CD8-positive, alpha-beta T cell (primary cell): ENCODE measurements at regions of chr9 and their contacts with region 1.

Region 1: DNA sequence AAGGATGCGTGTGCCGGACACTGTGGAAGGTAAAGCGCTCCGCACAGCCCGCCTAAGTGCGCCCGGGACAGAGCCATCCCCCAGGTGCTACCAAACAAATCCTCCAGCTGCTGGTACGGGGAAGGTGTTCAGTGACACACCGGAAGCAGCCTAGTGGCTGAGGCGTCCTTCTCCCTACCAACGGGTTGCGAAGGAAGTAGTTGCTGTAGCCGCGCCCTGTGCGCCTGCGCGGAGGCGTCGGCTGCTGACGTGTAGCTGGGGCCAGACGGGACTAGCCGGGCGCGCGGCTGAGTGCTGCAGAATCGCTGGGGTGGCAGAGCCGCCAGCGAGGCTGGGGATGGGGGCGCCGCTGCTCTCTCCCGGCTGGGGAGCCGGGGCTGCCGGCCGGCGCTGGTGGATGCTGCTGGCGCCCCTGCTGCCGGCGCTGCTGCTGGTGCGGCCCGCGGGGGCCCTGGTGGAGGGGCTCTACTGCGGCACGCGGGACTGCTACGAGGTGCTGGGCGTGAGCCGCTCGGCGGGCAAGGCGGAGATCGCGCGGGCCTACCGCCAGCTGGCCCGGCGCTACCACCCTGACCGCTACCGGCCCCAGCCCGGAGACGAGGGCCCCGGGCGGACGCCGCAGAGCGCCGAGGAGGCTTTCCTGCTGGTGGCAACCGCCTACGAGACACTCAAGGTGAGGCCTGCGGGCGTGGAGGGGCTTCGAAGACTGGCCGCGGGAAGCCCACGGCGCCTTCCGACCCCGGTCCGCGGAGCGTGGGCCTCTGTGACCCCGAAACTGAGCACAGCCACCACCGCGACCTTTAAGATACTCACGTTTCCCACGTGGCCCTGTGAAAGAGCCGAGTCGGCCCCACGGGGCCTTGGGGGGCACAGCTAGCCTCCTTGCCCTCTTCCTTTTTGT is at the start of gene DNAJC25:
- DNase-seq: peak; percentile 92 to 99 (median 96)
- ATAC-seq: peak; percentile 94
- H3K4me3 ChIP-seq: peak within 1 kb of the TSS; percentile 50 to 69
- H3K4me3 Mint-ChIP-seq: peak within 1 kb of the TSS; percentile 98
- H3K27ac ChIP-seq: peak within 1 kb of the TSS; percentile 78 to 80
- H3K27ac Mint-ChIP-seq: peak within 1 kb of the TSS; percentile 92
- H3K4me1 ChIP-seq: peaks cover 18% of the 10 kb centered on the region
- H3K4me1 Mint-ChIP-seq: peaks cover 47% of the 10 kb centered on the region
- H3K27me3 ChIP-seq: no peaks in the 10 kb centered on the region
- H3K27me3 Mint-ChIP-seq: no peaks in the 10 kb centered on the region
- CTCF ChIP-seq: no peak
- total RNA-seq, gene DNAJC25: 5.8 to 7.2 TPM

Region 2: DNA sequence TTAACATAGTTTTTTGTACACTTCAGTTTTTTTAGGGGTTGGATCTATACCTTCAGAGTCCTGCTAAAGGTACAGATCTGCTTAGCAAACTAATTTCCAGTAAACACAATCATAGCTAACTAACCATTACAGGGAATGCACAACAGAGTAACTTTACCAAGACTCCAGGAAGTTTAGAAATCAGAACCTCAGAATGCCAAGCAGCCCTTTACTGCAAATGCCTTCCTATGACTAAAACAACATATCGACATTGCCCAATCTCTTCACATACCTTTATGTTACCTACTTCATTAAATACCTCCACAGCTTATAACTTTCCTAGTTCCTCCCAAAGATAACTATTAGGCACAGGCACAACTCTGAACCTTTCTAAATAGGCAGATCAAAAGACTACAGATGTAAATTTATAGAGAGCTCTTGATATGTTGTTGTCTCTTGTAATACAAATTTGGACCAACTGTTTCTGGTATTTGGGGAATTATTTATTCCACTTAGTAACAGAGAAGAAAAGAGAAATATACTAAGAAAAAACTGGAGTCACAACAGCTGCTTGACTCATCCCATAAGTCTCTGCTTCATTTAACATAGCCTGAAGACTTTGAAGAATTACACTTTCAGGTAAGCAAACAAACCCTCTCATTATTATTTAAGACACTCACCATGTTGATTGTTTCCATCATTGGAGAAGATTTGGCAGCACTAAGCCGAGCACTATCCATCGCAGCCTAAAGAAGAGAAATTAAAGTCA is 255.3 kb before region 1 on chr9:
- CTCF ChIA-PET with region 1: no interaction called
- POLR2A ChIA-PET with region 1: no interaction called
- intact Hi-C with region 1: no loop called
- DNase-seq: no peak
- ATAC-seq: no peak
- H3K4me3 ChIP-seq: no peak overlapping the region
- H3K4me3 Mint-ChIP-seq: no peak overlapping the region
- H3K27ac ChIP-seq: no peak overlapping the region
- H3K27ac Mint-ChIP-seq: peak overlapping the region; percentile 5
- H3K4me1 ChIP-seq: no peaks in the 10 kb centered on the region
- H3K4me1 Mint-ChIP-seq: no peaks in the 10 kb centered on the region
- H3K27me3 ChIP-seq: no peaks in the 10 kb centered on the region
- H3K27me3 Mint-ChIP-seq: no peaks in the 10 kb centered on the region
- CTCF ChIP-seq: no peak

Region 3: DNA sequence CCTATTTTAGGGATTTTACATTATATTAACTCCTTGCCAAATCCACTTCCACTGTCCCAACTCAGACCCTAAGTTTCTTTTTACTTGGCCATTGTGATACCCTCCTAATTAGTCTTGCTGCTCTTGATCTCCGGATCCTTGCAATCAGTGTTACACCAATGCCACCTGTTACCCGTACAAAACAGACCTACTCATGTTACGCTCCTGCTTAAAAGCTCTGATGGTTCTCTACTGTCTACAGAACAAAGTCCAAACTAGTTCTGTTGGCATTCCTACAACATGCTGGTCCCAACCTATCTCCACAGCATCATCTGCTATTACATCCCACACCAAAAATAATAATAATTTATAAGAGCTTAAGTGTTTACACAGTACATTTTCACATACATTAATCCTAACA is 156.9 kb before region 1 on chr9:
- CTCF ChIA-PET with region 1: no interaction called
- POLR2A ChIA-PET with region 1: no interaction called
- intact Hi-C with region 1: no loop called
- DNase-seq: no peak
- ATAC-seq: no peak
- H3K4me3 ChIP-seq: no peak overlapping the region
- H3K4me3 Mint-ChIP-seq: no peak overlapping the region
- H3K27ac ChIP-seq: no peak overlapping the region
- H3K27ac Mint-ChIP-seq: peak overlapping the region; percentile 12
- H3K4me1 ChIP-seq: no peaks in the 10 kb centered on the region
- H3K4me1 Mint-ChIP-seq: peaks cover 52% of the 10 kb centered on the region
- H3K27me3 ChIP-seq: no peaks in the 10 kb centered on the region
- H3K27me3 Mint-ChIP-seq: no peaks in the 10 kb centered on the region
- CTCF ChIP-seq: no peak

Region 4: DNA sequence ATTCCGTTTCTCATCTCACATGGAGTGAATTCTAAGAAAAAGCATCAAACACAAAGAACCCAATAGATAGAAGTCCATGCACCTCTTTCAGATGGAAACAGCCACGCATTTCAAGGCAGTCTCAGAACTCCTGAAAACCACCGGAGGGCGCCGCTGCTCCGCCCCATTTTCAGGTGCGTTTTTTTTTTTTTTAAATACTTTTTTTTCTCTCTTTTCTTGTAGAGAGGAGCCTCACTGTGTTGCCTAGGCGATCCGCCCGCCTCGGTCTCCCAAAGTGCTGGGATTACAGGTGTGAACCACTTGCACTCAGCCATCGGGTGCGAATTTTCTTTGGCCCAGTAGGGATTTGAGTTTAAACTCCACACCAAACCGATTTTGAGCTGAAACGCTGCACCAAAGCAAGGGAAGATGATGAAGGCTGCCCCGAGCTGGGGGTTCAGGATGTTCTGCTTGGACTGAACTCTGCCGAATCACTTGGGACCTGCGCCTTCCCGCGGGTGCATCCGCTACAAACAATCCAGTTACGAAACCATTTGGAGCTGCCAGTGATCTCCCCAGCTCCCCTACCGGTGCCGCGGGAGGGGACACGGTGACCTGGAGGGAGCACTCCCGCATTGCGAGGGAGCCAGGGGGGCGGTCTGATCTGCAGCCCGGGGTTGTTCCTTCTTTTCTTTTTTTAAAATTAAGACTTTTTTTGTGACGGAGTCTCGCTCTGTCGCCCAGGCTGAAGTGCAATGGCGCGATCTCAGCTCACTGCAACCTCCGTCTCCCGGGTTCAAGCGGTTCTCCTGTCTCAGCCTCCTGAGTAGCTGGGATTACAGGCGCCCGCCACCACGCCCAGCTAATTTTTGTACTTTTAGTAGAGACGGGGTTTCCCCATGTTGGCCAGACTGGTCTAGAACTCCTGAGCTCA is 33.2 kb before region 1 on chr9:
- CTCF ChIA-PET with region 1: interaction called, 3 read pairs
- POLR2A ChIA-PET with region 1: no interaction called
- intact Hi-C with region 1: loop called in 1 of 2 experiments (anchors 2 kb)
- DNase-seq: peak; percentile 9 to 80 (median 62)
- ATAC-seq: peak; percentile 75
- H3K4me3 ChIP-seq: peak overlapping the region; percentile 47 to 66
- H3K4me3 Mint-ChIP-seq: peak overlapping the region; percentile 87
- H3K27ac ChIP-seq: no peak overlapping the region
- H3K27ac Mint-ChIP-seq: no peak overlapping the region
- H3K4me1 ChIP-seq: peaks cover 12% of the 10 kb centered on the region
- H3K4me1 Mint-ChIP-seq: peaks cover 19% of the 10 kb centered on the region
- H3K27me3 ChIP-seq: peaks cover 15 to 16% of the 10 kb centered on the region in 2 experiments
- H3K27me3 Mint-ChIP-seq: peaks cover 41% of the 10 kb centered on the region
- CTCF ChIP-seq: peak; percentile 72

Region 5: GRCh38 chr9:111752455-111752854 is 121.1 kb after region 1 on chr9:
- CTCF ChIA-PET with region 1: no interaction called
- POLR2A ChIA-PET with region 1: no interaction called
- intact Hi-C with region 1: no loop called
- DNase-seq: no peak
- ATAC-seq: no peak
- H3K4me3 ChIP-seq: no peak overlapping the region
- H3K4me3 Mint-ChIP-seq: no peak overlapping the region
- H3K27ac ChIP-seq: no peak overlapping the region
- H3K27ac Mint-ChIP-seq: no peak overlapping the region
- H3K4me1 ChIP-seq: no peaks in the 10 kb centered on the region
- H3K4me1 Mint-ChIP-seq: no peaks in the 10 kb centered on the region
- H3K27me3 ChIP-seq: no peaks in the 10 kb centered on the region
- H3K27me3 Mint-ChIP-seq: no peaks in the 10 kb centered on the region
- CTCF ChIP-seq: no peak

Region 6: DNA sequence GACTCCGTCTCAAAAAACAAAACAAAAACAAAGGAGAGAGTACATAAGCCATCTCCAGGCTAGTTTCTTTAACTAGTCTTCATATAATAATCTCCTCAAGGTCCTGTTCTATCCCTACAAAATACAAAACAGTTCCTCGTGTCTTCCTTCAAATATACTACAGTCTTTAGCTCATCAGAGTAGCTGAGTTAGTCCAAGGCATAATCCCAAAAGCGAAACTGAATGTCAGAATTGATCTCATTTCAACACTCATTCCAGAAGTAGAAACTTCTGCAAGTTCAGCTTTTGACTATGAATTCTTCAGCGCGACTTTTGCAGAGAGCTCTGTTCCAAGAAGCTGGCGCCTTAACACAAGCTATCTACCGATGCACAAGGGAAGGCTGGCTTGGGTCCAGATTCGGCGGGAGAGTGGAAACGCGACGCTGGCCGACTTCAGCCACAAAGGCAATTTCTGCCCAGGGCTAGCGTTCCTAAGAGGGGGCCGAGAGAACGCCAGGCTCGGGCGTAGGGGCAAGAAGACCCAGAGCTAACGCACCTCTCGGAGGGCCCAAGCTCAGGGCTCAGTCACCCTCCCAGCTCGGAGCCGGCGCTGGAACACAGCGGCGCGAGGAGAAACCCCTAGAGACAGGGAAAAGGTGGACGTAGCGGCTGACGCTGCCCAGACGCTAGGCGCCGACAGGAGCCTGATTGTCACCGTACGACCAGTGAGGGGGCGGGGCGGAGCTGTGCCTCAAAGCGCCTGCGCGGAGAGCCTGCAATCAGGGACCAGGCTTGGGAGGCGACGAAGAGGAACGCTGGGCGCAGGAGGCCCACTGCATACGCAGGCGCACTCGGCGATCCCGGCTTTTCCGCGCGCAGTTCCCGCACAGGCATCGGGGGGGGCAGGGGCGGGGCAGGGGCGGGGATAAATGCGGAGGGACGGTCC is 748.1 kb after region 1 on chr9:
- CTCF ChIA-PET with region 1: no interaction called
- POLR2A ChIA-PET with region 1: no interaction called
- intact Hi-C with region 1: loop called (anchors 1 to 10 kb)
- DNase-seq: peak; percentile 93 to 99 (median 97)
- ATAC-seq: peak; percentile 95
- H3K4me3 ChIP-seq: peak overlapping the region; percentile 81 to 96
- H3K4me3 Mint-ChIP-seq: peak overlapping the region; percentile 99
- H3K27ac ChIP-seq: peak overlapping the region; percentile 77 to 92
- H3K27ac Mint-ChIP-seq: peak overlapping the region; percentile 96
- H3K4me1 ChIP-seq: peaks cover 27% of the 10 kb centered on the region
- H3K4me1 Mint-ChIP-seq: peaks cover 54% of the 10 kb centered on the region
- H3K27me3 ChIP-seq: no peaks in the 10 kb centered on the region
- H3K27me3 Mint-ChIP-seq: no peaks in the 10 kb centered on the region
- CTCF ChIP-seq: no peak

Region 7: DNA sequence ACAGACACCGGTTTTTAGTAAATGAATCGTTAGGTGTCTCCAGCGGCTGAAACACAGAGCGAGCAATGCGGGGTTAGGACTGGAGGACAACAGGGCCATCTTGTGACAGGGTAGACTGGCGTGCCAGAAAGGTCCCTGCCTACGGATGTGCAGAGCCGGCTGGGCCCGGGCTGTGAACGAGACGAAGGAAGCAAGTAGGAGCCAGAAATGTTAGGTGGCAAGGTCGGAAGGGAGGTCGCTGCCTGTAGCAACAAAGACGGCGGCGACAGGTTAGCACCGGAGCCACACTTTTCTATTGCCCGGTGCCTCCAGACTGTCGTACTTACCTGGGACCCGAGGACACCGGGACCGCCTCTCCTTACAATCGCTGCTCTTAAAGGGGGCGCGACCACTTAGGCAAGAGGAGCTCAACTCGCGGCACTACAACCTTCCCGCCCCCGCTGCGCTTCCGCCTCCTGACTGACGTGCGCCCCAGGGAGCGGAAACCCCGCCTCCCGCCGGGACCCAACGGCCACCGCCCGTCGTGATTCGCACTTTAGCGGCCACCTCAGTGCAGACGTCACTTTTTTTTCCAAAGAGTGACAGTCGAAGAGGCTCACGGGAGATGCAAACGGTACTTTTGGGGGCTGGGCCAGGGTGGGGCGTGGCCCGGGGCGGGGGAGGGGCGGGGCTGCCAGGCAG is 1086.5 kb after region 1 on chr9 and contains the start of gene INIP:
- CTCF ChIA-PET with region 1: no interaction called
- POLR2A ChIA-PET with region 1: no interaction called
- intact Hi-C with region 1: loop called (anchors 2 to 10 kb)
- DNase-seq: peak; percentile 94 to 99 (median 97)
- ATAC-seq: peak; percentile 90
- H3K4me3 ChIP-seq: peak within 1 kb of the TSS; percentile 83 to 97
- H3K4me3 Mint-ChIP-seq: peak within 1 kb of the TSS; percentile 94
- H3K27ac ChIP-seq: peak within 1 kb of the TSS; percentile 95 to 96
- H3K27ac Mint-ChIP-seq: peak within 1 kb of the TSS; percentile 98
- H3K4me1 ChIP-seq: peaks cover 15% of the 10 kb centered on the region
- H3K4me1 Mint-ChIP-seq: peaks cover 30% of the 10 kb centered on the region
- H3K27me3 ChIP-seq: no peaks in the 10 kb centered on the region
- H3K27me3 Mint-ChIP-seq: no peaks in the 10 kb centered on the region
- CTCF ChIP-seq: no peak
- total RNA-seq, gene INIP: 11.7 to 17.2 TPM

Region 8: DNA sequence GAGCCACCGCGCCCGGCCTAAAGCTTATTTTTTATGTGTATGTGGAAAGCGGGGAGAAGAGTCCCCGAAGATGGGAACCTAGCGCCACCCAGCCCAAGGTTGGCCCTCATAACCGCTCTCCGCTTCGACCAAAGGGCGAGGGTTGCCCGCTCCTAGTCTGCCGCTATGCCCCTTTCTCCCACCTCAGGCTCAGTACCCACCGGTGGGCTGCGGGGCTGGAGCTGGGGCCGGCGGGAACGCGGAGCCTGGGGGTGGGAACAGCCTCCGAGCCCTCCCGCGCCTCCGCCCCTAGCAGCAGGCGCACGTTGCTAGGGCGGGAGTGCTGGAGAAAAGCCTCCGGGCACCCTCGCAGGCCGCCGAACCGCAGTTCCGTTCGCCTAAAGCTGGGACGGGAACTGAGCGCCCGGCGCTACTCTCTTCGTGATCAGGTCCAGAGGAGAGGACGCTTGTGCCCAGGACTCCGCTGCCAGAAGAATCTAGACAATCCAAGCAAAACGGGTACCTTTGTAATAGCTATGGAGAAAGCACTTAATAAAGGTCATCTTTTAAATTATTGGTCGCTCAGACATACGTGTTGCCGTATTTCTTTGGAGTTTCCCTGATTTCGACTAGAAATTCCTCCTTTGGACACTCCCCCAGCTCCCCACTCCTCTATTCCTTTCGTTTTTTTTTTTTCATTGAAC is 1708.8 kb after region 1 on chr9 and contains the start of gene WDR31:
- CTCF ChIA-PET with region 1: no interaction called
- POLR2A ChIA-PET with region 1: no interaction called
- intact Hi-C with region 1: loop called (anchors 2 kb)
- DNase-seq: peak; percentile 58 to 90 (median 78)
- ATAC-seq: peak; percentile 99
- H3K4me3 ChIP-seq: peak within 1 kb of the TSS; percentile 70 to 83
- H3K4me3 Mint-ChIP-seq: peak within 1 kb of the TSS; percentile 83
- H3K27ac ChIP-seq: peak within 1 kb of the TSS in 1 of 2 experiments; percentile 46
- H3K27ac Mint-ChIP-seq: no peak within 1 kb of the TSS
- H3K4me1 ChIP-seq: peaks cover 19% of the 10 kb centered on the region
- H3K4me1 Mint-ChIP-seq: peaks cover 24% of the 10 kb centered on the region
- H3K27me3 ChIP-seq: peaks cover 0 to 3% of the 10 kb centered on the region in 2 experiments
- H3K27me3 Mint-ChIP-seq: peaks cover 2% of the 10 kb centered on the region
- CTCF ChIP-seq: no peak
- total RNA-seq, gene WDR31: 0.11 to 0.43 TPM